ENCODE measurements at regions of chr14 and their contacts with region 1.

Region 1: GRCh38 chr14:36553656-36554260 is 28.7 kb downstream of the NKX2-8 start:
- DNase-seq: peak; percentile 49
- H3K4me3 ChIP-seq: no peak overlapping the region
- H3K27ac ChIP-seq: no peak overlapping the region
- H3K4me1 ChIP-seq: no peaks in the 10 kb centered on the region
- H3K27me3 ChIP-seq: peaks cover 3 to 6% of the 10 kb centered on the region in 2 experiments
- CTCF ChIP-seq: peak; percentile 56 to 61
- POLR2A ChIP-seq: no peak

Region 2: GRCh38 chr14:35883677-35884293 is 670.0 kb before region 1 on chr14:
- CTCF ChIA-PET with region 1: no interaction called
- POLR2A ChIA-PET with region 1: no interaction called
- dilution Hi-C with region 1: no loop called
- intact Hi-C with region 1: loop called (anchors 5 kb)
- DNase-seq: no peak
- H3K4me3 ChIP-seq: no peak overlapping the region
- H3K27ac ChIP-seq: no peak overlapping the region
- H3K4me1 ChIP-seq: peaks cover 6% of the 10 kb centered on the region
- H3K27me3 ChIP-seq: peaks cover 2 to 4% of the 10 kb centered on the region in 2 experiments
- CTCF ChIP-seq: peak; percentile 52 to 53
- POLR2A ChIP-seq: no peak

Region 3: GRCh38 chr14:36367985-36368774 is 185.6 kb before region 1 on chr14:
- CTCF ChIA-PET with region 1: no interaction called
- POLR2A ChIA-PET with region 1: no interaction called
- dilution Hi-C with region 1: no loop called
- intact Hi-C with region 1: no loop called
- DNase-seq: no peak
- H3K4me3 ChIP-seq: no peak overlapping the region
- H3K27ac ChIP-seq: no peak overlapping the region
- H3K4me1 ChIP-seq: no peaks in the 10 kb centered on the region
- H3K27me3 ChIP-seq: peaks cover 2 to 3% of the 10 kb centered on the region in 2 experiments
- CTCF ChIP-seq: no peak
- POLR2A ChIP-seq: no peak

Region 4: GRCh38 chr14:36520601-36521525 is 32.9 kb before region 1 on chr14:
- CTCF ChIA-PET with region 1: interaction called, 10 read pairs
- POLR2A ChIA-PET with region 1: no interaction called
- dilution Hi-C with region 1: no loop called
- intact Hi-C with region 1: no loop called
- DNase-seq: peak; percentile 6
- H3K4me3 ChIP-seq: no peak overlapping the region
- H3K27ac ChIP-seq: no peak overlapping the region
- H3K4me1 ChIP-seq: peaks cover 6% of the 10 kb centered on the region
- H3K27me3 ChIP-seq: peaks cover 90 to 99% of the 10 kb centered on the region in 2 experiments
- CTCF ChIP-seq: peak; percentile 18 to 45
- POLR2A ChIP-seq: no peak

Region 5: GRCh38 chr14:36529062-36529461 is 24.7 kb before region 1 on chr14:
- CTCF ChIA-PET with region 1: interaction called, 11 read pairs
- POLR2A ChIA-PET with region 1: no interaction called
- dilution Hi-C with region 1: no loop called
- intact Hi-C with region 1: no loop called
- DNase-seq: no peak
- H3K4me3 ChIP-seq: no peak overlapping the region
- H3K27ac ChIP-seq: no peak overlapping the region
- H3K4me1 ChIP-seq: no peaks in the 10 kb centered on the region
- H3K27me3 ChIP-seq: peaks cover 33 to 58% of the 10 kb centered on the region in 2 experiments
- CTCF ChIP-seq: no peak
- POLR2A ChIP-seq: no peak

Region 6: DNA sequence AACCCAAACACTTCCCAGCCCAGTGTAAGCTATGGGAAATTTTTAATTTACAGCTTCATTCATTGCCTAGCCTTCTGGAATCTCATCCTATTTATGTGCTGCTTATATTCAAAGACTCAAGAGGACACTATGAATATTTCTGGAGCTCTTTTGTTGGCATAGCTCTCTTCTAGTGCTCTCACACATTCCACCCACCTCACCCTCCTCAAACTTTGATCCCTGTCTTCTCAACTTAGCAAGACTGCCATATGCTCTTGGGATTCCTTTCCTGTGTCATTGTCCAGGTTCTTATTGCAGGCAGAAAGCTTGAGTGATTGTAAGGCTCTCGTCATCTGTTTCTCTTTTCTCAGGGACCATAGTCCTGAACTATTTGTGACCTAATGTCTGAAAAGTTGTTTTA is 15.7 kb before region 1 on chr14:
- CTCF ChIA-PET with region 1: interaction called, 38 read pairs
- POLR2A ChIA-PET with region 1: no interaction called
- dilution Hi-C with region 1: no loop called
- intact Hi-C with region 1: no loop called
- DNase-seq: no peak
- H3K4me3 ChIP-seq: no peak overlapping the region
- H3K27ac ChIP-seq: no peak overlapping the region
- H3K4me1 ChIP-seq: no peaks in the 10 kb centered on the region
- H3K27me3 ChIP-seq: peaks cover 6 to 11% of the 10 kb centered on the region in 2 experiments
- CTCF ChIP-seq: no peak
- POLR2A ChIP-seq: no peak

Region 7: GRCh38 chr14:36604757-36605505 is 51.2 kb after region 1 on chr14:
- CTCF ChIA-PET with region 1: interaction called, 89 read pairs
- POLR2A ChIA-PET with region 1: no interaction called
- dilution Hi-C with region 1: no loop called
- intact Hi-C with region 1: loop called (anchors 1 kb)
- DNase-seq: peak; percentile 70
- H3K4me3 ChIP-seq: no peak overlapping the region
- H3K27ac ChIP-seq: no peak overlapping the region
- H3K4me1 ChIP-seq: no peaks in the 10 kb centered on the region
- H3K27me3 ChIP-seq: peaks cover 2 to 3% of the 10 kb centered on the region in 2 experiments
- CTCF ChIP-seq: peak; percentile 72 to 73
- POLR2A ChIP-seq: no peak